HEK293 (cell line): ENCODE measurements at regions of chr2 and their contacts with region 1.

Region 1: DNA sequence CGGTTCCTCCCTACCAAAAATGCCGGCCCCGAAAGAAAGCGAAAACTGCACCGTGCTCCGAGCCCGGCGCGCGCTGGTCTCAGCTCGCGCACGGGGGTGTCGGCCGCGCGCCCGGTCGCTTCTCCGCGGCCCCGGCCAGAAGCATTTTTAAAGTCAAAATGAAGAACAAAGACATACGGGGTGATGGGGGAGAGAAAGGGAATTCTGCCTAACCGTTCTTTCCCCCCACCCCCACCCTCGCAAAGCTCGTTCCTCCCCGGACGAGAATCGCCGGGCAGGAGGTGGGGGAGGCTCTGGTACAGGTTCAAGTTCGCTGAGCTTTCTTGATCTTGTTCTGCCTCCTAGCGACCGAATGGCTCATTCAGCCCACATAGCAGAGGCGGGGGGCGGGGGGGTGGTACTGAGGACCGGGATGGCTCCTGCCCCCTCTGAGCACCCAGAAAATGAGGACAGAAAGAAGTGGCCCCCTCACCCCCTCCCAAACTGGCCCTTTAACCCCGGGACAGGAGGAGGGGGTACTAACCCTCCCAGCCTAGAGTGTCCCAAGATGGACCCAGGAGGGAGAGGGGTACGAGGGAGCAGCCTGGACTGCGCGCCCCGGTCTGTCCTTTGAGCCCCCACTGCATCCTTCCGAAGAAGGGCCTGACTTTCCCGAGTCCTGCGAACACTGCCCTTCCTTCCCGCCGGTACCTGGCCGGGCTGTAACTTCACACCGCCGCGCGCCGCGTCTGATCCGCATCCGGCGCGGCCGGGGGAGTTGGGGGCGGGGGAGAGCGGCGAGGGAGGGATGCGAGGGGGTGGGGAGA is 3.1 kb downstream of the BCL11A start:
- H3K4me3 ChIP-seq: peak overlapping the region; percentile 77
- H3K27ac ChIP-seq: peak overlapping the region; percentile 99
- H3K4me1 ChIP-seq: peaks cover 19% of the 10 kb centered on the region
- CTCF ChIP-seq: peak; percentile 73

Region 2: DNA sequence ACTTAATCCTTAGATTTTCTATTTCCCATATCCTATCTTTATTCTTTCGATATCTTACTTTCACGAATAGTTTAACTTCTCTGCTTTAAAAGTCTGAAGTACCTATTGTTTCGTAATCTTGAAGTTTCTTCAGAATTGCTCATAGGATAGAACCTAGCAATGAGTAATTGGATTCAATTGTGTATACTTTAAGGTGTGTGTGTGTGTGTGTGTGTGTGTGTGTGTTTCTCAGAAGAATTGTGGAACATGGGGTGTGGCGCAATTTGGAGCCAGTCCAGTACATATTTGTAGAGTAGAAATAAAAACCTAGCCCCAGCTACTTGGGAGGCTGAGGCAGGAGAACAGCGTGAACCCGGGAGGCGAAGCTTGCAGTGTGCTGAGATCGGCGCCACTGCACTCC is 894.6 kb before region 1 on chr2:
- CTCF ChIA-PET with region 1: no interaction called
- POLR2A ChIA-PET with region 1: interaction called, 10 read pairs
- H3K4me3 ChIP-seq: no peak overlapping the region
- H3K27ac ChIP-seq: no peak overlapping the region
- H3K4me1 ChIP-seq: no peaks in the 10 kb centered on the region
- CTCF ChIP-seq: no peak

Region 3: GRCh38 chr2:60530660-60531281 is 19.6 kb before region 1 on chr2:
- CTCF ChIA-PET with region 1: interaction called, 3 read pairs
- POLR2A ChIA-PET with region 1: interaction called, 12 read pairs
- H3K4me3 ChIP-seq: peak overlapping the region; percentile 28
- H3K27ac ChIP-seq: peak overlapping the region; percentile 85
- H3K4me1 ChIP-seq: peaks cover 59% of the 10 kb centered on the region
- CTCF ChIP-seq: no peak

Region 4: GRCh38 chr2:60560734-60561644 is 10.6 kb after region 1 on chr2:
- CTCF ChIA-PET with region 1: interaction called, 16 read pairs
- POLR2A ChIA-PET with region 1: interaction called, 10 read pairs
- H3K4me3 ChIP-seq: no peak overlapping the region
- H3K27ac ChIP-seq: no peak overlapping the region
- H3K4me1 ChIP-seq: peaks cover 29% of the 10 kb centered on the region
- CTCF ChIP-seq: peak; percentile 77

Region 5: DNA sequence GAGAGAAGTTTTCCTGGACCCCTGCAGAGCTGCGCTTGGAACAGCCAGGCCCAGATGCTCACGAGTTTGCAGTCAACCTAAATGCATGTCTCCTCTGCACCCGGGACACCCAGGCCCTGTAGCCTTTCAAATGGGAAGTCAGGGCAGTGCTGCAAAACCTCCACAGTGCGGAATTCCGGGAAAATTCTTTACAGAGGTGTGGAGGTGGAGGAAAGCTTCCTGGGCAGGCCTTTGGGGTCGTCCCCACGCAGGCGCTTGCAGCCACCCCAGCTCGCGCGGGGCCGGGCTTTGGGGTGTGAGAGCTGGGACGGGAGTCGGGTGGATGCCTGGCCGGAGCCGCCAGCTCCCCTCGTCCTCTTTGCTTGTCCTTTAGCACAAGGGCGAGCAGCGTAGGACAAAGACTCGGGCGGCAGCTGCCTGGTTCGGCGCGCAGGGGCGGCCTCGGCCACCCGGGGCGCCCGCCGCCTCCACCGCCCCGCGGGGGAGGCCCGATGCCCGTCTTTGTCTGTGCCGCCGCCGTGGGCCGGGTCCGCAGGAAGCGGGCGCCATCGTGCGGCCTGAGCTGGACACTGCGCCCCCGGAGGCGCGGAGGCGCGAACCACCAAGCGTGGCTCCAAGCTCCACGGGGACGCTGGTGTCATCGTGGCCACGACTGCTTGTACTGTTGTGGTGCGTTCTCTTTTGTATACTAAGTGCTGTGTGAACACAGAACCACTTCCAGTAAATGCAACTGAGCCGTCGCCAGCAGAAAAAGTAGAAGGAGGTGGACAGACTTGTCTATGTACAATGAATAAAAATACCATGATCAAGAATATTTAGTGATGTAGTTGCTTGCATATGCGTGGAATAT is 31.3 kb after region 1 on chr2:
- CTCF ChIA-PET with region 1: interaction called, 5 read pairs
- POLR2A ChIA-PET with region 1: interaction called, 13 read pairs
- H3K4me3 ChIP-seq: peak overlapping the region; percentile 31
- H3K27ac ChIP-seq: peak overlapping the region; percentile 48; the same call in 1 of the 2 replicates
- H3K4me1 ChIP-seq: peaks cover 6% of the 10 kb centered on the region
- CTCF ChIP-seq: peak; percentile 92